GM10248 (cell line): ENCODE measurements at regions of chr6 and their contacts with region 1.

Region 1: GRCh38 chr6:56570413-56571359 is 72.0 kb downstream of the DST start:
- DNase-seq: peak; percentile 30
- CTCF ChIP-seq: no peak

Region 2: GRCh38 chr6:55886185-55886836 is 684.4 kb before region 1 on chr6:
- CTCF ChIA-PET with region 1: no interaction called
- POLR2A ChIA-PET with region 1: no interaction called
- DNase-seq: no peak
- CTCF ChIP-seq: peak; percentile 12

Region 3: GRCh38 chr6:56359201-56359899 is 211.3 kb before region 1 on chr6:
- CTCF ChIA-PET with region 1: interaction called, 11 read pairs
- POLR2A ChIA-PET with region 1: no interaction called
- DNase-seq: peak; percentile 55
- CTCF ChIP-seq: peak; percentile 58

Region 4: DNA sequence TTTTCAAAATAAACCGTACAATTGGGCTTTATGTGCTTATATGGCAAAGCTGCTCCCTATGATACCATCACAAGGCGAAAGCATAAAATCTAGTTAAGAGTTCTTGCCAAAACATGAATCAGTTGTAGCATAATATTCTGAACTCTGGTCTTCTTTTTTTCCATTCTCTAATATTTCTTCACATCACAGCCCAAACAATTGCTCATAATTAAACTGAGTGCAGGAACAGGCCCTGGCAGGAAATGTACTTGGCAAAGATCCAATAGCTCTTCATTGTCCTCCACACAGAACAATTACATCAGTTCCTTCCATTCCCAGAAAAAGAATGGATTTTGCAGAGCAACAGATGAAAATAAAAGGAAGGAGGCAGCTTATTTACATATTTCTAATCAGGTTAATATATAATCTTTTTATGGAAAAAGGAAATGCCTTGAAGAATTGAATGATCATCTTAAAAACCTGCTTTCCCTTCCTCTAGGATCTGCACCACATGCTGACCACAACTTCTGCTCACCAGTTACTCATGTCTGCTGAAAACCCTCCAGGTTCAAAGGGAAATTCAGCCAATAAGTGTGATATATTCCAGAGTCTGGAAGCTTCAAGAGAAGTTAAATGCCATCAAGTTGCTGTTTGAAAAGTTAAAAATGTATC is 200.0 kb before region 1 on chr6:
- CTCF ChIA-PET with region 1: interaction called, 12 read pairs
- POLR2A ChIA-PET with region 1: no interaction called
- DNase-seq: peak; percentile 18
- CTCF ChIP-seq: no peak

Region 5: DNA sequence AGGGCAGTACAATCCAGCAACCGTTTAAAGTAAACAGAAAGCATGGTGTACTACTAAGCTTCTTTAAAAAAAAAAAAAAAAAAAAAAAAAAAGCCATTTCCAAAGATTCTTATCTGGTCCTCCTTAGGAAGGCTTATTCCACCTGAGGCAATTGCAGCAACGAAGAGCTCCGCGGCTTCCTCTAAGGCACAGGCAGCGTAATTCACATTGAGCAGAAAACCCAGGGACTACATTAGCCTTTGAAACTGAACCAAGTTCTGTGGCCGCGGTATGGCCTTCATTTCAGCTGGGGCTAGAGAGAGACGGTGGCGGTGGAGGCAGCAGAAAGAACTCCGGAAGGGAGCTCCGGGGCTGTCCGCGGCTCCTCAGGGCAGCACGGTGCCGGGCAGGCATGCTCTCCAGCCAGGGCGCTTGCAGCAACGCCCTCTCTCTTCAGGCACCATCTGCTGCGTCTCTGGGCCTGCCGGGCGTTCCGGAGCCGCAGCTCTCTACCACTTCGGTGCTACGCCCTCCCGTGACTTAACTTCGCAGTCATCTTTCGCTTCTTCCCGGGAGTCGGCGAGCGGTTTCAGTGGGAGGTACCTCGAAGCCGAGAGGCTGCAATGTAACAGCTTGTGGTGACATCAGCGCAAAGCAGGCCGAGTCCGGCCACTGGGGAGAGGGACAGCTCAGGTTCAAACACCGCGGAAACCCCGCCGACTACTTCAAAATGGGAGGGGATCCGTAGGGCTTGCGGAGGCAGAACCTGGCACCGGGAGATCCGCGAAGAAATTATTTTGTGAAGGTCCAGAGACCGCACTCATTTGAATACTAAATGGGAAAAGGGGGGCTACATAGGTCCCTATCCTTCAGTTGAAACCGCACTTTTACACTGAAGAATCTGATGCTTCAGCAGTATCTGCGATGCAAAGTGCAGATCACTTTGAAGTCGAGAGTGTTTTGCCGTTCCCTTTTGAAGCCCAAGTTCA is 28.0 kb before region 1 on chr6:
- CTCF ChIA-PET with region 1: interaction called, 28 read pairs
- POLR2A ChIA-PET with region 1: no interaction called
- DNase-seq: peak; percentile 84
- CTCF ChIP-seq: peak; percentile 25

Region 6: DNA sequence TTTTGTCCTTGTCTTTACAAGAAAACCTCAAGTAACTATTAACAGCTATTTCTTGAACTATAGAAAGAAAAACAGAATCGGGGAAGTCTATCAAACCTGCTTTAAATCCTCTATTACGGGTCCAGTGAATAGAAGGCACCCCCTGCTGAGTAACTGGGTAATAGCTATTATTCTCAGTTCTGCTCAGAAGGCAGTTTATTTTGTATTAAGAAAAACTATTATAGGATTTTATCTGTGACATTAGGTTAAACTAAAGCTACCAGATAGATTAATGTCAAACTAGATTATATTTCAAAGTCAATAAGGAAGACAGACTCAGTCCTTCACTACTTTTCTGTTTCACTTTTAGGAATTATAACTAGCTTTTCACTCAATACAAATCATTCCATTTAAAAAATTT is 21.7 kb before region 1 on chr6:
- CTCF ChIA-PET with region 1: interaction called, 28 read pairs
- POLR2A ChIA-PET with region 1: no interaction called
- DNase-seq: no peak
- CTCF ChIP-seq: peak; percentile 28

Region 7: GRCh38 chr6:56555438-56555872 is 15.2 kb before region 1 on chr6:
- CTCF ChIA-PET with region 1: interaction called, 28 read pairs
- POLR2A ChIA-PET with region 1: no interaction called
- DNase-seq: no peak
- CTCF ChIP-seq: no peak

Region 8: DNA sequence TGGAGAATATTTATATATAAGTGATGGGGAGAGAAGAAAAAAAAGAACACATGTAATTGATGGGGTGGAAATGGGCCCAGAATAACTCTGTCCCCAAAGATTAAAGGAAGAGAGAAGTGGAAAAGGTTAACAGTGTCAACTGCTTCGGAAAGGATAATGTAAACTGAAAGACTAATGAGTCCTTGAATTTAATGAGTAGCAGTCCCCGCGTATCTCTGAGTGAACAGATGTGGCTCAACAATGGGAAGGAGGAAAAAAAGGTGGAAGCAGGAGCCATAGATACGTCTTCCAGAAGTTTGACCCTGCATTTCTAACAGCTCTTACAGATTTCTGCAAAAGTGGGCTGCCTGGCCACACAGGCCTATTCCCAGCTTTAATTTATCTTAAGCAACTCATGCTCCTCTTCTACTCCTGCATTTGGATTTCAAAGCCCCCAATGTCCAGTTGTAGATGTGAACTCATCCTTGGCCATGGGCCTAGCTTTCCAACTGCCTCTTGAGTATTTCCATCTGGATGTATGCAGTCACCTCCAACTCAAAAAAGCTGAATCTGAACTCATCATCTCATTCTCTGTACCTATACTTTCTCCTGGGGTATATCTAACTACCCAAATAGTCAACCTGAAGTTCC is 10.7 kb after region 1 on chr6:
- CTCF ChIA-PET with region 1: interaction called, 11 read pairs
- POLR2A ChIA-PET with region 1: no interaction called
- DNase-seq: no peak
- CTCF ChIP-seq: no peak